ENCODE measurements at regions of chr6 and their contacts with region 1.

Region 1: GRCh38 chr6:3277851-3278416 is 19.2 kb downstream of the PSMG4 start:
- DNase-seq: no peak
- H3K4me3 ChIP-seq: no peak overlapping the region
- H3K27ac ChIP-seq: no peak overlapping the region
- H3K4me1 ChIP-seq: no peaks in the 10 kb centered on the region
- H3K27me3 ChIP-seq: no peaks in the 10 kb centered on the region
- CTCF ChIP-seq: no peak

Region 2: DNA sequence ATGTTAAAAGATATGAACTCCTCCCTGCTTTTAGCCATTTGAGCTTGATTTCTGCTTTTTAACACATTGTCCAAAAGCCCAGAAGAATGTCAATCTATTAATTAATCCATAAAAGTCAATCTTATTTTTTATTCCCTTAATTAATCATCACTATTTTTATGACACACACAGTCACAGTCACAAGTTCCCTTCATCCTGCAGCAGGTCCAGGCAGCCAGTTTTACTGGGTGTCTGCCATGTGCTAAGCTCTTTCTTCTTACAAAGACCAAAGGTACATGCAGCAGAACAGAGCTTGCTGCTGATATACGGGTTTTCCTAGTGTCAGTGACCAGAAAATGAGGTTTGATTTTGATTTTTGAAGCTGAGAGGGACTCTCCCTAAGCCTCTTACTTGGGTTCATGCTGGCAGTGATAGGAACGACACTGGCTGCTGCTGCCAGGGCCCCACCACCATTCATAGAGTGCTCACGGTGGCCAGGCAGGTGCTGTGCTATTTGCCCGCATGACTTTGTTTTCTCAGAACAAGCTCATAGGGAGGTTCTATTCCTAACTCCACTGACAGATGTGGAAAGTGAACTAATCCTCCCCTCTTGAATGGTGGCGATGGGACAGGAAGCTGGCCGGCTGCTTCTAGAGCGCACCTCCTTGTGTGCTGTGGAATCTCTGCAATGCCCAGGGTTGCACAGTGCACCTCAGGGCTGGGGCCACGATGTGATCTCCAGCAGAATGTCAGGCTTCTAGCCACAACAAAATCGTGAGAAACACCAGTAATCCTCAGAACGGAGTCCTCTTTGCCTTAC is 232.4 kb after region 1 on chr6:
- CTCF ChIA-PET with region 1: no interaction called
- POLR2A ChIA-PET with region 1: no interaction called
- intact Hi-C with region 1: loop called (anchors 1 kb)
- DNase-seq: no peak
- H3K4me3 ChIP-seq: no peak overlapping the region
- H3K27ac ChIP-seq: no peak overlapping the region
- H3K4me1 ChIP-seq: peaks cover 34% of the 10 kb centered on the region
- H3K27me3 ChIP-seq: no peaks in the 10 kb centered on the region
- CTCF ChIP-seq: no peak

Region 3: DNA sequence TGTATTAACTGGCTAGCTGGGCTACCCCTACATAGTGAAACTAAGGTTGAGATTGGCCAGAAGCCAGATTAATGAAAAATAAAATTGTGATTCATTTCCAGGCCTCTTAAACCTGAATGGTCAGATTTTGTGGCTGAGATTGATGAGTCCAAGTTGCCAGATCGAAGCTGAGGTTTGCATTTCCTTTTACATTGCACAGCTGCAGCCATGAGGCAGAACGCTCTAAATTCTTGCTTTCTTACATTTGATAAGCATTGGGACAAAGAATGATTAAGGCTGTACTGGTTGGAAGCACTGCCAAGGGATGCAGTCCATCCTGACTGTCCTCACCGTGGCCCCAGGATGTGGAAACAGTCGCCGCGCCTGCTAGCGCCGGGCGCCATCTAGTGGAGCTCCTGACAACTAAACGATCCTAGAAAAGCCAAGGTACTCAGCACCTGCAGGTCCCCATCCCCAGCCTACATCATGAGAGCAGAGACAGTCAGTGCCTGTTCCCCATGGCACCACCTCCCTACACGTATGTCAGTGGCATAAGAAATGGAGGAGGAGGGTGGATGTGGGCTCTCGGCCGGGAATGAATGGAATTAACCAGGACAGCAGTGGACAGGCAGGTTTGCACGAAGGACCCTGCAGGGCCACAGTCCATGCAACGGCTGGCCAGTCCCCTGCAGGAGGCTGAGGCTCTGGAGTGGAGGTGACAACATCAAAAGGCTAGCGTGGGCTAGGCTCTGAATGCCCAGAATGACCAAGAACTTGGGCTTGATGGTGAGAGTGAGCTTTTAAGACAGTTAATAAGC is 454.6 kb after region 1 on chr6:
- CTCF ChIA-PET with region 1: no interaction called
- POLR2A ChIA-PET with region 1: no interaction called
- intact Hi-C with region 1: loop called (anchors 1 kb)
- DNase-seq: peak; percentile 55 to 72
- H3K4me3 ChIP-seq: no peak overlapping the region
- H3K27ac ChIP-seq: no peak overlapping the region
- H3K4me1 ChIP-seq: no peaks in the 10 kb centered on the region
- H3K27me3 ChIP-seq: no peaks in the 10 kb centered on the region
- CTCF ChIP-seq: peak; percentile 86

Region 4: DNA sequence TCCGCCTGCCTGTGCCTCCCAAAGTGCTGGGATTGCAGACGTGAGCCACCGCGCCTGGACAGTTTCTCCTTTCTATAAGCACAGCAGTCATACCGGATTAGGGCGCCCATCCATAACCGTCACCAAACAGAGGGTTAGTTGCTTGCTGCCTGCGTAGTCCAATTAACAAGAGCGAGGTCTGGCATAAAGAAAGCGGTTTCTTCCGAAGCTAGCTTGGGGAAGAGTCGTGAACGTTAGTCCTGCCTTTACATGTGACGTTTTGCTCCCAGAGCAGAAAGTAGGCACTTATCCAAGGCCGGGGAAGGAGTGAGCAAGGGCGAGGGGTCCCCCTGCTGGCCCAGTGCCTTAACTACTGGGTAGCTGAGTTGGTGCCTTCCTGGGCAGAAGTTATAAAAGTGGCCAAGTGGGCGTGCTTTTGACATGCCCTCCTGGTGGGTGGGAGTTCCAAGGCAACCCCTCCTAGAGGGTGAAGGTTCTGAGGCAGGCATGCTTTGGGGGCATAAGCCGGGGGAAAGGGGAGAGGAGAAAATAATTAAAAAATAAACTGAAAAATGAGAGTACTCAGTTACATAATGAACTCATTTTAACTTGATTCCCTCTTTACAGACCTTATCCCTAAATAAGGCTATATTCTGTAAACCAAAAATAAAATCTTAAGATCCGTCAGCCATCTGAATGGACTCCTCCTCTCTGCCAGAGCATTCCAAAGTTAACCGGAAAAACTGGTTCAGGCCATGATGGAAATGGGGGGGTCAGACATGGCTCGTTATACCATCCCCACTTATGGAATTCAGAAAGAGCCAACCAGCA is 713.0 kb after region 1 on chr6:
- CTCF ChIA-PET with region 1: no interaction called
- POLR2A ChIA-PET with region 1: no interaction called
- intact Hi-C with region 1: loop called (anchors 5 kb)
- DNase-seq: peak; percentile 53 to 80
- H3K4me3 ChIP-seq: peak overlapping the region; percentile 39; the same call in 1 of the 2 replicates
- H3K27ac ChIP-seq: peak overlapping the region; percentile 47; the same call in 1 of the 2 replicates
- H3K4me1 ChIP-seq: peaks cover 14% of the 10 kb centered on the region
- H3K27me3 ChIP-seq: no peaks in the 10 kb centered on the region
- CTCF ChIP-seq: peak; percentile 90

Region 5: DNA sequence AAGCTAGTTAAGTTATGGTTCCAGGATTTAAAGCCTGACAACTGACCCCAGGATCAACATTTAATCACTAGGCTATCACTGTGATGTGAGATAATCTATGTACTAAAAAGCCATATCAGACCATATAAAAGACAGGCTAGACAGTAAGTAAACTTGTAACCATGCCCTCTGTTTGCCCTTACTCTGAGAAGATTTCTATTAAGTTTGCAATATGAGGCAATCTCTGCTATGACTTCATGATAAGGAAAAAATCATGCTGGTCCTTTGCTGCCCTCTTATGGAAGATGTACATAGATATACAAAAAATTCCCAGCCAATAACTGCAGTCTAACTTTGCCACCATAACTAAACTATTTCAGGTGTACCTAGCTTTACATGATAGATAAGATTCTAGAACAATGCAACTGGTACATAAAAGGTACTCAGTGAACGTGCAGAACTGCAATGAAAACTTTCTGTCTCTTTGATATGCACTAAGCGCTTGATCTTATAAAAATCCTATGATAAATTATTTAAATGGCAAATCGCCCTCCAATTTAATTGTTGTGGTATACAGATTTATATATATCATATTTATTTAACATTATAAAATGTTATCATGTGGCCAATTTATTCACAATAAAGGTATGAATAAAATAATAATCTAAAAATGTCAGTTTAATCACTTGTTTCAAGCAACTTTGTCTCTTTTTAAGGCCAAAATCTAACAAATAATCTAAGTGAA is 730.6 kb after region 1 on chr6:
- CTCF ChIA-PET with region 1: no interaction called
- POLR2A ChIA-PET with region 1: no interaction called
- intact Hi-C with region 1: loop called (anchors 5 kb)
- DNase-seq: peak in 1 of 2 experiments; percentile 75
- H3K4me3 ChIP-seq: no peak overlapping the region
- H3K27ac ChIP-seq: peak overlapping the region; percentile 54
- H3K4me1 ChIP-seq: peaks cover 5% of the 10 kb centered on the region
- H3K27me3 ChIP-seq: no peaks in the 10 kb centered on the region
- CTCF ChIP-seq: peak; percentile 70